Heart right ventricle (tissue), 16 donors: ENCODE measurements at regions of chr9 and their contacts with region 1.

Region 1: DNA sequence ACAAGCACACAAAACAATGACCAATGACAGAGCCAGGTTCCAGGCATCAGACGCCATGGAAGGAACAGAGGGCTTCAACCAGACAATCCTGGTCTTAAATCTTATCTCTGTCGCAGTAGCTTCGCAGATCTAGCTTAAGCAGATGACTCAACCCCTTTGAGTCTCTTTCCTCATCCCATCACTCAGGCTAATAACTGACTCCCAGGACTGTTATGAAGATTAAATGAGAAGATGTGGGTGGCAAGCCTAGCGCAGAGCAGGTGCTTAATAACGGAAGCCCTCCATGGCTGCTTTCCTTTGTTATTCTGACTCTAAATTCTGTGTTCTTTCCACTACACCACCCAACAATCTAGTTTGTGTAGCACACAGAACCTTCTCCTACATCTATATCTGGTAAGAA is 110.9 kb downstream of the SLC24A2 start:
- DNase-seq: no peak
- ATAC-seq: no peak
- H3K4me3 ChIP-seq: no peak overlapping the region
- H3K27ac ChIP-seq: no peak overlapping the region
- H3K4me1 ChIP-seq: no peaks in the 10 kb centered on the region
- H3K27me3 ChIP-seq: no peaks in the 10 kb centered on the region
- CTCF ChIP-seq: no peak

Region 2: GRCh38 chr9:19732441-19732951 is 54.6 kb after region 1 on chr9:
- intact Hi-C with region 1: loop called in 1 of 10 experiments (anchors 10 kb)
- DNase-seq: no peak
- ATAC-seq: no peak
- H3K4me3 ChIP-seq: no peak overlapping the region
- H3K27ac ChIP-seq: no peak overlapping the region
- H3K4me1 ChIP-seq: no peaks in the 10 kb centered on the region
- H3K27me3 ChIP-seq: no peaks in the 10 kb centered on the region
- CTCF ChIP-seq: no peak